ENCODE measurements at regions of chr13 and their contacts with region 1.

Region 1: DNA sequence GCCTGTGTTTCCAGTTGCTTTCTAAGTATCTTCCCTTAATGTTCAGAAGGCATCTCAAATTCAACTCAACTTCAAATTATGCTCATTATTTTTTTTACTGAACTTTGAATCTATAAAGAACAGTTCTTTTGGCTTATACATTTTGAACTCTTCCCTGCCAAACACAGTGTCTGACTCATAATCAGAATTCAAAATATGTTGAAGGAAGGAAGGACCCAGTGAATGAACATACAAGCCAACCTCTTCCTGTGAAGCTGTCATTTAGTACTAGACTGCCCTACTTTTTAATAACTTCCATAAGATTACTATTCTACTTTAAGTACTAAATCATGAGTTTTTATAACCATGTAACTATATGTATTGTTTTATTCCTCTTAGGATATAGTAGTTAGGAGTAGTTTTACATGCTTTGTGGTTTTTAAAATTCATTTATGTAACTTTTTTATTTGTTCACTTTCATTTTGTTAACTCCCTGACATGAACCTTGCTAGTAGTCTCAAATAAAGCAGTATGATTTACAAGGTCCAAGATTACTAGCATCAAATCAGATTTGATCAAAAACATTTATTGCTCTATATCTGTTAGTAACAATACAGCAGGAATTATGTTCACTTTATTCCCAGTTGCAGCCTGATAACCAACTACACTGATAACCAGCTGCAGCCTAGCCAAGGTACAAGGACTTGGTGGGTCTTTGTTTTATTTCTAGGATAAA is 6.4 kb downstream of the NUDT15 start:
- DNase-seq: no peak
- H3K4me3 ChIP-seq: no peak overlapping the region
- H3K27ac ChIP-seq: peak overlapping the region in 1 of 5 donors; percentile 9
- H3K4me1 ChIP-seq: peaks cover 0 to under 1% (median under 1%) of the 10 kb centered on the region in 4 donors
- H3K27me3 ChIP-seq: no peaks in the 10 kb centered on the region
- CTCF ChIP-seq: no peak
- EP300 ChIP-seq: no peak
- POLR2A ChIP-seq: no peak

Region 2: GRCh38 chr13:48094781-48095502 is 51.0 kb after region 1 on chr13 and contains the start of gene MED4:
- intact Hi-C with region 1: loop called (anchors 10 kb)
- DNase-seq: peak; percentile 96 to 98
- H3K4me3 ChIP-seq: peak within 1 kb of the TSS; percentile 75 to 100 (median 99)
- H3K27ac ChIP-seq: peak within 1 kb of the TSS; percentile 78 to 96 (median 86)
- H3K4me1 ChIP-seq: peaks cover 12 to 62% (median 36%) of the 10 kb centered on the region in 4 donors
- H3K27me3 ChIP-seq: no peaks in the 10 kb centered on the region
- CTCF ChIP-seq: peak in 6 of 7 experiments; percentile 90 to 100 (median 99)
- EP300 ChIP-seq: no peak
- POLR2A ChIP-seq: peak in 1 of 4 donors; percentile 76
- total RNA-seq, gene MED4: 7.0 to 68.3 (median 25.9) TPM

Measured in stomach (tissue), 19 donors.